SK-N-SH (cell line): ENCODE measurements at regions of chr12 and their contacts with region 1.

Region 1: GRCh38 chr12:64801381-64801780 is 23.1 kb upstream of the TBC1D30 start:
- DNase-seq: peak; percentile 31
- H3K4me3 ChIP-seq: no peak overlapping the region
- H3K27ac ChIP-seq: no peak overlapping the region
- H3K4me1 ChIP-seq: no peaks in the 10 kb centered on the region
- H3K27me3 ChIP-seq: peaks cover 17% of the 10 kb centered on the region; the same call in 1 of the 2 replicates
- CTCF ChIP-seq: peak; percentile 45
- EP300 ChIP-seq: no peak
- RAD21 ChIP-seq: peak; percentile 23; the same call in 1 of the 2 replicates

Region 2: DNA sequence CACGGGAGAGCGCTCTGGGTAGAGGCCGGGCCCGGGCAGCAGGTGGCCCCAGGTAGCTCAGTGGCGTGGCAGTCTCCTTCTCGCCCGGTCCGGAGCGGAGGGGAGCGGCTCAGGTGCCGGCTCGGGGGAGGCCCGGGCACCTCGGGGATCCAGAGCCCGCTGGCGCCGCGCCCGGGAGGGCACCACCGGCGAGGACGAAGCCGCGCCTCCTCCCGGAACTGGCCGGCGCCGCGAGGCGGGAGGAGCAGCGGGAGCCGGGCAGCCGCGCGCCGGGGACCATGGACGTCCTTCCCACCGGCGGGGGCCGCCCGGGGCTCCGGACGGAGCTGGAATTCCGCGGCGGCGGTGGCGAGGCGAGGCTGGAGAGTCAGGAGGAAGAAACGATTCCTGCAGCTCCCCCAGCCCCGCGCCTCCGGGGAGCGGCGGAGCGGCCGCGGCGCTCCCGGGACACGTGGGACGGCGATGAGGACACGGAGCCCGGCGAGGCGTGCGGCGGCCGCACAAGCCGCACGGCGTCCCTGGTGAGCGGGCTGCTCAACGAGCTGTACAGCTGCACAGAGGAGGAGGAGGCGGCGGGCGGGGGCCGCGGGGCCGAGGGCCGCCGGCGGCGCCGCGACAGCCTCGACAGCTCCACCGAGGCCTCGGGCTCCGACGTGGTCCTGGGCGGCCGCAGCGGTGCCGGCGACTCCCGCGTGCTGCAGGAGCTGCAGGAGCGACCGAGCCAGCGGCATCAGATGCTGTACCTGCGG is 20.7 kb before region 1 on chr12:
- CTCF ChIA-PET with region 1: interaction called, 38 read pairs
- POLR2A ChIA-PET with region 1: no interaction called
- DNase-seq: peak; percentile 81
- H3K4me3 ChIP-seq: peak overlapping the region in 1 of 2 experiments; percentile 41; a peak in 3 of 4 replicates
- H3K27ac ChIP-seq: no peak overlapping the region
- H3K4me1 ChIP-seq: peaks cover 0 to 7% of the 10 kb centered on the region in 2 experiments; a peak in 1 of 4 replicates
- H3K27me3 ChIP-seq: peaks cover 55% of the 10 kb centered on the region
- CTCF ChIP-seq: no peak
- EP300 ChIP-seq: no peak
- RAD21 ChIP-seq: no peak

Region 3: DNA sequence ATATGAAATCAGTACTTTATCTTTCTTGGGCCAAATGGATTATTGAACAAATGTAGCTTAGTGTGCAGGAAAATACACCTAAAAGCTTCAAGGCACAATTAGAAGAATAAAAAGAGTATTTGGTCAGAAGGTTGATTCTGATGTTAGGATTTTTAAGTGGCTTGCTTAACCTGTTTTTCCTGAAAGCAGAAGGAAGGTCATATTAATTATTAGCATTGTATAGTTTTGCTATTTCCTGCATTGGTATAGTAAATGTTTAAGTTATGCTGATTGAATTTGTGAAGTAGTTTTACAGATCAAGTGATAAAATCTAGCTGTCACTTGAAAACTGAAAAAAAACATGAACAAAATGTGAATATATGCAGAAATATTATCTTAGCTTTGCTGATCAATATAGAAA is 11.2 kb before region 1 on chr12:
- CTCF ChIA-PET with region 1: interaction called, 21 read pairs
- POLR2A ChIA-PET with region 1: no interaction called
- DNase-seq: no peak
- H3K4me3 ChIP-seq: no peak overlapping the region
- H3K27ac ChIP-seq: no peak overlapping the region
- H3K4me1 ChIP-seq: no peaks in the 10 kb centered on the region
- H3K27me3 ChIP-seq: peaks cover under 1% of the 10 kb centered on the region; the same call in 1 of the 2 replicates
- CTCF ChIP-seq: no peak
- EP300 ChIP-seq: no peak
- RAD21 ChIP-seq: no peak

Region 4: GRCh38 chr12:64814432-64814831 is 13.1 kb after region 1 on chr12:
- CTCF ChIA-PET with region 1: interaction called, 21 read pairs
- POLR2A ChIA-PET with region 1: no interaction called
- DNase-seq: no peak
- H3K4me3 ChIP-seq: no peak overlapping the region
- H3K27ac ChIP-seq: no peak overlapping the region
- H3K4me1 ChIP-seq: no peaks in the 10 kb centered on the region; a peak in 1 of 4 replicates
- H3K27me3 ChIP-seq: peaks cover 4% of the 10 kb centered on the region; the same call in 1 of the 2 replicates
- CTCF ChIP-seq: no peak
- EP300 ChIP-seq: no peak
- RAD21 ChIP-seq: no peak

Region 5: DNA sequence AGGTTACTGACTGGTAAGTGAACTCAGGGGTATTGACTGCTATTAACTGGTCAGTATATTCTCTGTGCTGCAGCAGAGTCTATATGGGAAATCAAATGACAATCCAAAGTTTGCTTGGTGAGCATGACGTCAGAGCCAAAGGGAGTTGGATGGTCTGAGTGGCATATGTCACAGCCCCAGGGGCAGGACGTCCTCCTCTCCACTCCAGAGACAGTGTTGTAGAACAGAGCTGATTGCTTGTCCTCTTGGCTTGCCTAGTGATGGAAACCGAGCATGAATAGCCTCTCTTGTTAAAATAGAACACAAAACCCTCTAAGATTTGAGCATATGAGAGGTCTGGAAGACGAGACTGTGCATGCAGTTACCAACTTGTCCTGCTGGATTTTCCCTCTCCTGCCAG is 19.8 kb after region 1 on chr12:
- CTCF ChIA-PET with region 1: interaction called, 15 read pairs
- POLR2A ChIA-PET with region 1: no interaction called
- DNase-seq: no peak
- H3K4me3 ChIP-seq: no peak overlapping the region
- H3K27ac ChIP-seq: no peak overlapping the region
- H3K4me1 ChIP-seq: peaks cover 0 to 4% of the 10 kb centered on the region in 2 experiments; a peak in 1 of 4 replicates
- H3K27me3 ChIP-seq: peaks cover 31% of the 10 kb centered on the region
- CTCF ChIP-seq: no peak
- EP300 ChIP-seq: no peak
- RAD21 ChIP-seq: no peak

Region 6: DNA sequence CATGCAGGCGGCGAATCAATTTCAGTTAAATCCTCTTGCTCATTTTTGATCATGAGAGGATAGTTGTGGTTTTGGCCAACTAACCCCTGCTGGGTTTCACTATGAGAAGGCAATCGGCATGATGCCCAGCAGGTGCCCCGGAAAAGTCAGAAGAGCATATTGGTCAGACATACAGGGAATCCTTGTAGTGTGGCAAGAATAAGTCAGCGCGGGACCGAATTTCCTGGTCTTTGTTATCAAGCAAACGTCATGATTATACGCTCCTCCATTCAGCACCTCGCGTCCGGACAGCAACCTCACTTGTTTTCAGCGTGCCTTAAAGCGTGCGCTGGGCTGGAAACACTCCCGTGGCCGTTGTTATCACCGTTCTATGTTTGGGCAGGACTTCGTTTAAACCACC is 24.9 kb after region 1 on chr12:
- CTCF ChIA-PET with region 1: interaction called, 15 read pairs
- POLR2A ChIA-PET with region 1: no interaction called
- DNase-seq: peak; percentile 26
- H3K4me3 ChIP-seq: no peak overlapping the region
- H3K27ac ChIP-seq: no peak overlapping the region
- H3K4me1 ChIP-seq: peaks cover 0 to 4% of the 10 kb centered on the region in 2 experiments; a peak in 1 of 4 replicates
- H3K27me3 ChIP-seq: peaks cover 36% of the 10 kb centered on the region
- CTCF ChIP-seq: no peak
- EP300 ChIP-seq: no peak
- RAD21 ChIP-seq: no peak

Region 7: GRCh38 chr12:64955746-64956145 is 154.4 kb after region 1 on chr12:
- CTCF ChIA-PET with region 1: no interaction called
- POLR2A ChIA-PET with region 1: no interaction called
- DNase-seq: no peak
- H3K4me3 ChIP-seq: no peak overlapping the region
- H3K27ac ChIP-seq: no peak overlapping the region
- H3K4me1 ChIP-seq: no peaks in the 10 kb centered on the region
- H3K27me3 ChIP-seq: no peaks in the 10 kb centered on the region
- CTCF ChIP-seq: no peak
- EP300 ChIP-seq: no peak
- RAD21 ChIP-seq: no peak

Region 8: GRCh38 chr12:65039306-65039705 is 237.9 kb after region 1 on chr12:
- CTCF ChIA-PET with region 1: no interaction called
- POLR2A ChIA-PET with region 1: no interaction called
- DNase-seq: no peak
- H3K4me3 ChIP-seq: no peak overlapping the region
- H3K27ac ChIP-seq: no peak overlapping the region
- H3K4me1 ChIP-seq: no peaks in the 10 kb centered on the region
- H3K27me3 ChIP-seq: no peaks in the 10 kb centered on the region
- CTCF ChIP-seq: no peak
- EP300 ChIP-seq: no peak
- RAD21 ChIP-seq: no peak

Region 9: DNA sequence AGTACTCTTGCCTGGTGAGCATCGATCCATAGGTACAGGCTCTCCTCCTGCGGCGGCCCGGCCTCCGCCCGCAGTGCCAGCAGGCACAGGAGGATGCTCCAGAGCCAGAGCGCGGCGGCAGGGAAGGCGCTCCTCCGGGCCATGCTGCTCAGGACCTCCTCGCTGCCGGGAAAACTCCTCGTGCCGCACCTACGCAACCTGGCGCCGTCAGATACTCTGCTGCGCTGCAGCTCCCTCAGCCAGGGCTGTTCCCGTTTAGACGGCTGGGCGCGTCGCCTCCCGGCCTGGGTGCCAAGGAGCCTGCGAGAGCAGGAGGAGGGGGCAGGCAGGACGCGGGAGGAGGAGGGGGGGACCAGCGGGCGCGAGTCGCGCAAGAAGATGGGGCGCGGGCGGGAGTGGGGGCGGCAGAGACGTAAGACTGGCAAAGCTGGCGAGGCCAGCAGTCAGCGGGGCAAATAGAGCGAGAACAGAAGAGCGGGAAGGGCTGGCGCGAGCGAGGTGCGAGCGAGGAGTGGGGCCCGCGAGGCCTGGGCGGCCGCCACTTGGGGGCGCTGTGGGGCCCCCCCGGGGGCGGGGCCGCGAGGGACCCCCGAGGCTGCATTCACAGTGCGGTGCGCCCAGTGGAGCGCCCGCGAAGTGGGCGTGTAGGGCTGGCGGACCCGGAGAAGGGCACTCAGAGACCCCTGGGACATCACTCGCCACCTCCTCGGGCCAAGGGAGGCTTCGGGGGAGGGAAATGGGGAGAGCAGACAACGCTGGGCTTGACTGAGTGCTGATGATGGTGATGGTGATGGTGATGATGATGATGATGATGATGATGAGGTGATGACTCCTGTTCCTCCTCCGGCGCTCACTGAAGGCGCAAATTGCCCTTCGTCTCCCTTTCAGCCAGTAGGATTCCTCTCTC is 319.9 kb after region 1 on chr12 and contains the start of gene WIF1:
- CTCF ChIA-PET with region 1: interaction called, 13 read pairs
- POLR2A ChIA-PET with region 1: no interaction called
- DNase-seq: peak; percentile 69
- H3K4me3 ChIP-seq: peak within 1 kb of the TSS; percentile 14 to 37; a peak in 3 of 4 replicates
- H3K27ac ChIP-seq: no peak within 1 kb of the TSS
- H3K4me1 ChIP-seq: no peaks in the 10 kb centered on the region; a peak in 1 of 4 replicates
- H3K27me3 ChIP-seq: peaks cover 68% of the 10 kb centered on the region
- CTCF ChIP-seq: peak; percentile 56
- EP300 ChIP-seq: no peak
- RAD21 ChIP-seq: no peak
- polyA plus RNA-seq, gene WIF1: not detected in 2 replicates